ENCODE measurements at regions of chr12 and their contacts with region 1.

Region 1: DNA sequence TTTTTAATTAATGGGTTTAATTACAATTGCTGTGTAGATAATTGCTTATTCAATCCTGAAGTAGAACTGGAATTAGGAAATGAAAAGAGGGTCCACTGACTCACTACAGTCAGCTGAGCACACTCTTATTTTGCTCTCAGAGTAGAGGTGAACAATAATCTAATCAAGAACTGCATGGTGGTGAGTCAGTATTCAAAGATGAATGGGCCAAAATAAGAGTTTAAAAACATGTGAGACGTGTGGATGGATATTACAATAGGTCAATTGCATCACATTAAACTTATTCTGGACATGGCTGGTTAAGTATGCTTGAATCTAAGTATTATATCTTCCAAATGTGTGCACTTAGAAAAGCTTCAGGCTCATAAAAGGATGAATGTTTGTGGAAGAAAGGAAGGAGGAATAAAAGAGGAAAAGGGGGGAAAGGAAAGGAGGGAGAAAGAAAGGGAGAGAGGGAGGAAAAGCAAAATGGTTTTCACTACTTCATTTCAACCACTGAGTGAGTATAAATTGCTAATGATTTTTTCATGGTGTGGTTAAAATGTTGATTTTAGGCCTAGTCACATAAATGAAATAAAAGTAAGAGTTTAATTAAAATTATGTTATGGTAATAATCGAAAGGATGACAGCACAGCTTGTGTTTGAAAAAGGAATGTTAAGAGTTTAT is 27.0 kb upstream of the EEA1 start:
- DNase-seq: peak; percentile 87
- H3K4me3 ChIP-seq: no peak overlapping the region
- H3K27ac ChIP-seq: peak overlapping the region; percentile 57
- H3K4me1 ChIP-seq: no peaks in the 10 kb centered on the region
- H3K27me3 ChIP-seq: no peaks in the 10 kb centered on the region
- CTCF ChIP-seq: no peak

Region 2: GRCh38 chr12:93042283-93042682 is 86.2 kb after region 1 on chr12:
- CTCF ChIA-PET with region 1: interaction called, 16 read pairs
- dilution Hi-C with region 1: no loop called
- in situ Hi-C with region 1: no loop called
- intact Hi-C with region 1: no loop called
- DNase-seq: no peak
- H3K4me3 ChIP-seq: no peak overlapping the region
- H3K27ac ChIP-seq: no peak overlapping the region
- H3K4me1 ChIP-seq: no peaks in the 10 kb centered on the region
- H3K27me3 ChIP-seq: no peaks in the 10 kb centered on the region
- CTCF ChIP-seq: no peak

Measured in mammary epithelial cell (primary cell).